ENCODE measurements at regions of chr10 and their contacts with region 1.

Region 1: DNA sequence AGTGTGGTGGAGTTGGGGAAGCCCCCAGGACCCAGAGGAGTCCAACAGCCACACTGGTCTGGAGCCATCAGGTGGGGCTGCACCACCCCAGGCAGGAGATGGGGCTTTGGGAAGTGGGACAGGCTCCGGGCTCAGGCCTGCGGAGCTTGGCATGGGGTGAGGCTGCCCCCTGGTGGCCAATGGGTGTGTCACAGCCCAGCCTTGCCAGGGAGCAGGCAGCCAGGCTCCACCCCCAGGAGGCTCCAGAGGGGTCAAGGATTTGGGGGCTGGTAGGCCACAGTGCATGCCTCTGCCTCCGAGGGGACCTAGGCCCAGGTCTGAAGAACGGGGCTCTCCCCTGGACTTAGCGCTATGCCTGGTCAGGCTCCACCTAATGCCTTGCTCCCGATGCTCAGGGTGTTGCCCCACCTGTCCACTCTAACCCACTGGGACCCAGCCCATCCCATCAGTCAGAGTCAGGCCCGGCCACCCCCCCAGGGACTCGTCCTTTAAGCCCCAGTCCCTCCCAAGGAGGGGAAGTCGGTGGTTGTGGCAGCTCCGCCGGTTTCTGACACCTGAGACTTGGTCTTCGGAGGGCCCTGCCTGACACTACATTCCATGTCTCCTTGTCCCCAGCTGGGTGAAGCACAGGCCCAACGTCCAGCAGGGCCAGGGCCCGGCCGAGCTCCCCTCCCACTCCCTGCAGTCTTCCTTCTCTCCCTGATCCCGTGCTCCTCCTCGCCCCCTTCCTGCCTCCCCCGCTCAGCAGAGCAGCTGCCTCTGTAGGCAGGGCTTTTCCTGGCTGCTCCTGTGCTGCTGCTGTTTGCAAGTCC is 11.3 kb upstream of the SAMD8 start:
- DNase-seq: peak; percentile 81
- ATAC-seq: peak; percentile 88

Region 2: GRCh38 chr10:74262856-74263255 is 837.3 kb before region 1 on chr10:
- intact Hi-C with region 1: loop called (anchors 2 to 5 kb)
- DNase-seq: no peak
- ATAC-seq: no peak

Region 3: GRCh38 chr10:74419958-74420375 is 680.2 kb before region 1 on chr10:
- intact Hi-C with region 1: loop called in 1 of 2 experiments (anchors 10 kb)
- DNase-seq: no peak
- ATAC-seq: no peak

Region 4: GRCh38 chr10:74826142-74827044 is 273.8 kb before region 1 on chr10 and contains the start of gene KAT6B:
- intact Hi-C with region 1: loop called in 1 of 2 experiments (anchors 10 kb)
- DNase-seq: peak; percentile 100
- ATAC-seq: peak; percentile 89 to 94
- total RNA-seq, gene KAT6B: 25.2 to 37.0 TPM

Region 5: DNA sequence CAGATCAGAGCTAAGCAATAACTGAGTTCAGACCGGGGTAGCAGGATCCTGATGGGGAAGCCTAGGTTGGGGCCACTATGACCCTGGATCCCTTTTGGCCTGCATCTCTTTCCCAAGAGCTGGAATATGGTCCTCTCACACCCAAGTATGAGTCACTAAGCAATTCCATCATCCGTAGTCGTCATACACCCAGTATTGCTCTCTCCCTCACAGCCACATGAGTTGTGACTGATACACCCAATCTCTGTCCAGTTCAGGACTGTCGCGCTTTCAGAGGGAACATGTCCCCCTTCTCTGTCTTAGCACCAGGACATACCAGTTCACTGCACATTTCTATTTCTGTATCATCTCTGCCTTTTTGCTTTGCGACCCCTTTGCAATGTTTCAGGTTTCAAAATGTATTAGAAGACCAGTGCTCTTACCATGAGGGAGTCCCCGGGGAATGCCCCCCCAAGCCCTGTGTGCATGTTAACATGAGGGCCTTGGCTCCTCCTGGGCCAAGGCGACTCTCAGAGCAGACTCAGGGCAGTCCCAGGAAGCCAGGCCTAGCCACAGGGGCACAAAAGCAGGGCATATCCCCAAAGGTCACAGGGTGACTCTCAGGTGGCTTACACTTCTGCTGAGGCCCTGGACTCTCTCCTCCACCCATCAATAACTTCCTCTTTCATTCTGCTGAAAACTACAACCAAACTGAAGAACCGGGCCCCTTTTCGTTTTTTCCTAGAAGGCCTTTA is 64.0 kb before region 1 on chr10:
- intact Hi-C with region 1: loop called in 1 of 2 experiments (anchors 10 kb)
- DNase-seq: no peak
- ATAC-seq: peak in 1 of 2 donors; percentile 3